Activated naive CD4-positive, alpha-beta T cell treated with anti-CD3 and anti-CD28 coated beads for 36 hours (primary cell): ENCODE measurements at regions of chr2 and their contacts with region 1.

Region 1: DNA sequence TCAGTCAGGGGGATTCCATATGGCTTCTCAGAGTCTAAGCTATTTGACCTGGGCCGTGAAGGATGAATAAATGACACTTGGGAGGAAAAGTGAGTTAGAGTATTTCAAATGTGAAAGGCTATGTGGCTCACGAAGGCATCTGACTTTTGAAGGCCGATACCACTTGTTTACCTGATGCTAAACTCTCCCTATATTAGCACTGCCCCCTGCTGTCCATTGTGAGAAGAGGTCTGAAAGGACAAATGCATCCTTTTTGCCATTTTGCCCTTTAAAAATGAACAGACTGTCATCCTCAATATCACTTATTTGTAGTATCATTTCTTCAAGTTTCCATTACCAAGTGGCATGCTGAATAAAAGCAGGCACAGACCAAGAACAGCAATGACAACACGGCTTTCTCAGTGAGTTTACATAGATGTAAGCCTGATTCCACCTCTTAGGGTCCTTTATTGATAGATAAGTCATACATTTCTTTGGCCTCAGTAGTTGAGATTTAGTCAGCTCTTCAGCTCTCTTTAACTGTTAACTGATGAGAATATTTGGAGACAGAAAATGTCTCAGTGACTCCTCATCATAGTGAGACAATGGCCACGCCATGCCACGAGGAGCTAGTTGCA is 40.1 kb downstream of the DOCK10 start:
- DNase-seq: peak; percentile 84
- H3K4me3 Mint-ChIP-seq: peak overlapping the region; percentile 22
- H3K27ac Mint-ChIP-seq: peak overlapping the region; percentile 86
- H3K4me1 Mint-ChIP-seq: peaks cover 83% of the 10 kb centered on the region
- H3K27me3 Mint-ChIP-seq: no peaks in the 10 kb centered on the region

Region 2: GRCh38 chr2:224836263-224836662 is 165.9 kb before region 1 on chr2:
- CTCF ChIA-PET with region 1: no interaction called
- intact Hi-C with region 1: no loop called
- DNase-seq: no peak
- H3K4me3 Mint-ChIP-seq: no peak overlapping the region
- H3K27ac Mint-ChIP-seq: no peak overlapping the region
- H3K4me1 Mint-ChIP-seq: peaks cover 3% of the 10 kb centered on the region
- H3K27me3 Mint-ChIP-seq: no peaks in the 10 kb centered on the region

Region 3: GRCh38 chr2:224885836-224886547 is 116.2 kb before region 1 on chr2:
- CTCF ChIA-PET with region 1: interaction called, 4 read pairs
- intact Hi-C with region 1: loop called (anchors 1 kb)
- DNase-seq: no peak
- H3K4me3 Mint-ChIP-seq: no peak overlapping the region
- H3K27ac Mint-ChIP-seq: peak overlapping the region; percentile 81
- H3K4me1 Mint-ChIP-seq: peaks cover 71% of the 10 kb centered on the region
- H3K27me3 Mint-ChIP-seq: no peaks in the 10 kb centered on the region

Region 4: GRCh38 chr2:224969633-224970260 is 32.4 kb before region 1 on chr2:
- CTCF ChIA-PET with region 1: interaction called, 10 read pairs
- intact Hi-C with region 1: no loop called
- DNase-seq: no peak
- H3K4me3 Mint-ChIP-seq: no peak overlapping the region
- H3K27ac Mint-ChIP-seq: peak overlapping the region; percentile 79
- H3K4me1 Mint-ChIP-seq: peaks cover 65% of the 10 kb centered on the region
- H3K27me3 Mint-ChIP-seq: no peaks in the 10 kb centered on the region

Region 5: DNA sequence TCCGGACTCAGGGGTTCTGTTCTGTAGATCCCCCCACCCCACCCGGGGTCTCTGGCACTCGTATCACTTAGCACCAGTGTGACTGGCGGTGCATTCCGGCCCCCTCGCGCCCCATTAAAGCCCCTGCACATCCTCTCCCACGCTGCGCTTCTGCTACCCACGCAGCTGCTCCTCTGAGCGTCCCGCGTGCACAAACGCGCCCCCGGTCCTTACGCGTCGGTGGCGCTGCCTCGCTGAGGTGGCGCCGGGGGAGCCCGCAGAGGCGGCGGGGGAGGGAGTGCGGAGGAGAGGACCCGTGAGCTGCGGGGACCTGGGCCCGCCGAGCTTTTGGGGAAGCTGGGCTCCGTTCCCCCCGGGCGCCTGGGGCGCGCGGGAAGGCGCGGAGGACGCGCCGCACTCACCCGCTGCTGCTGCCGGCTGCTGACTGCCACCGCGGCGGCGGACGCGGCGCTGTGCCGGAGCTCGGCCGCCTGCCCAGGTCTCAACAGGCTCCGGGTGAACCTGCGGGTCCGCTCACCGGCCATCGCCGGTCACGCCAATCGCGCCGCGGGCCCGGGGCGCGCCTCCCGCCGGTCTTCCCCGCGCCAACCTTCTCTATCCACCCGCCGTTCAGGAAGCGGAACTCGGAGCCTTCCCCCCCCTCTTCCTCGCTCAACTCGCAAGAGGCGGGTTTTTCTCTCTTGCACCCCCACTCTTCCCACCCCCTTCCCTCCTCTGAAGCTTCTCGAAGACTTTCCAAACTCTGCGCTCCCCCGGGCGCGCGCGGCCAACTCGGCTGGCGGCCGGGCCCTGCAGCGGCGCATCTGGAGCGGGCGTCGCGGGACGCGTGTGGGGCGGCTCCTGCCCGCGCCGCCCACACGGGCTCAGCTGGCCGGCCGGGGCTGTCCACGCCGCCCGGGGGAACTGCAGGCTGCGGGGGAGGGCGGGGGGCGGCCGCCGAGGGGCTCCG is 40.0 kb after region 1 on chr2 and contains the start of gene DOCK10:
- CTCF ChIA-PET with region 1: interaction called, 11 read pairs
- intact Hi-C with region 1: no loop called
- DNase-seq: peak; percentile 60
- H3K4me3 Mint-ChIP-seq: peak within 1 kb of the TSS; percentile 85
- H3K27ac Mint-ChIP-seq: peak within 1 kb of the TSS; percentile 96
- H3K4me1 Mint-ChIP-seq: peaks cover 39% of the 10 kb centered on the region
- H3K27me3 Mint-ChIP-seq: no peaks in the 10 kb centered on the region
- total RNA-seq, gene DOCK10: 123 to 137 TPM

Region 6: GRCh38 chr2:225177098-225177497 is 175.0 kb after region 1 on chr2:
- CTCF ChIA-PET with region 1: no interaction called
- intact Hi-C with region 1: loop called (anchors 1 kb)
- DNase-seq: peak; percentile 9
- H3K4me3 Mint-ChIP-seq: no peak overlapping the region
- H3K27ac Mint-ChIP-seq: no peak overlapping the region
- H3K4me1 Mint-ChIP-seq: no peaks in the 10 kb centered on the region
- H3K27me3 Mint-ChIP-seq: no peaks in the 10 kb centered on the region